ENCODE measurements at regions of chr11 and their contacts with region 1.

Region 1: DNA sequence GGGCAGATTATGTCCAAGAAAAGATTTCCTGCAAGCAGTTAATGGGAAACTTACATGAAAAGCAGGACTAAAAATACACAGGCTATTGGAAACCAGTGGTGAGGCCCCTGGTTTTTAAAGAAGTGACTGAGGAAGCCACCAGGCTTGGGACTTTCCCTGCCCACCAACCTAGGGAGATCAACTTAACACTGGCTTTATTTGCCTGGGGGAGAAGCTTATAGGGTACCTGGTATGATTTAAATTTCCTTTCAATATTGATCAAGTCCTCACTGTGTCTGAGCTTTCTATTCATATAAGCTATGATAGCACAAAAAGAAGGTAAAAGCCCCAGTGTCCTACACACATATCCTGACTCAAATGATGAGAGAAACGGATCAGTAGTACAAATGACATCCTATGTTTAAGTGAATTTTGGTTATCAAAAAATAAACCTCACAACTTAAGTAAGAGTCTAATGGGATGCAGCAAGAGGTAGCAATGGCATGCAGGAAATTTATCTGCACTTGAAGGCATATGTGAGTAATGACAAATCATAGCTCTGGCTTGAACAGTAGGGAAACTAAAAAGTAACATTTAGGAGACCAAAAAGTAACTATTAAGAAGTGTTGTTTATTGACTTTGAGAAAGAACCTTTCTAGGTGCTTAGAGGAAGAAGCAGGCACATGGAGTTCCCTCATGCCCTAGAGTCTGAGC is 85.3 kb downstream of the GAB2 start:
- DNase-seq: no peak
- H3K4me3 Mint-ChIP-seq: peak overlapping the region; percentile 47
- H3K27ac Mint-ChIP-seq: peak overlapping the region; percentile 90
- H3K4me1 Mint-ChIP-seq: peaks cover 87% of the 10 kb centered on the region
- H3K27me3 Mint-ChIP-seq: no peaks in the 10 kb centered on the region

Region 2: DNA sequence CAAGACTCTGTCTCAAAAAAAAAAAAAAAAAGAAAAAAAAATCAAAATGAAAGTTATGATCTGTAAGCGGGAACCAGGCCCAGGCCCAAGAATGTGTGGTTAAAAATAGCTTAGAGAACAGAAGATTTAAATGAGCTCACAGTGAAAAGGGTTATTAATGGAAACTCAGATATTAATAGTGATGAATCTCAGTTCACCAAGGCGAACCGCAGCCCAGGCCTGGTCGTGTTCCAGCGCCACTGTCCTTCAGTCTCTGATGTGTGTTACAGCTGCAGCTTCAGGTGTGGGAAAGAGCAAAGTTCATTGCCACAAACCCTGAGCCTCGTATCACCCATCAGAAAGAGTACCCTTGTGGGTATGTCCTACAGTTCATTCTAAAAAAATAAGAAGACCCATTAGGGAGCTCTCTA is 21.8 kb before region 1 on chr11:
- intact Hi-C with region 1: loop called (anchors 2 kb)
- DNase-seq: no peak
- H3K4me3 Mint-ChIP-seq: peak overlapping the region; percentile 38
- H3K27ac Mint-ChIP-seq: peak overlapping the region; percentile 49
- H3K4me1 Mint-ChIP-seq: peaks cover 77% of the 10 kb centered on the region
- H3K27me3 Mint-ChIP-seq: no peaks in the 10 kb centered on the region